GM12878 (cell line): ENCODE measurements at regions of chr1 and their contacts with region 1.

Region 1: GRCh38 chr1:169044296-169044695 is 62.2 kb upstream of the ATP1B1 start:
- DNase-seq: peak; percentile 76
- ATAC-seq: peak; percentile 94
- H3K4me3 ChIP-seq: no peak overlapping the region
- H3K27ac ChIP-seq: peak overlapping the region; percentile 45
- H3K4me1 ChIP-seq: peaks cover 47% of the 10 kb centered on the region
- H3K27me3 ChIP-seq: no peaks in the 10 kb centered on the region
- CTCF ChIP-seq: no peak
- EP300 ChIP-seq: peak in 1 of 2 experiments; percentile 28; a peak in 1 of 4 replicates
- POLR2A ChIP-seq: no peak
- RAD21 ChIP-seq: no peak

Region 2: GRCh38 chr1:169012416-169012815 is 31.9 kb before region 1 on chr1:
- CTCF ChIA-PET with region 1: interaction called, 9 read pairs
- POLR2A ChIA-PET with region 1: interaction called, 29 read pairs
- RAD21 ChIA-PET with region 1: interaction called, 21 read pairs
- SMC1A ChIA-PET with region 1: interaction called, 44 read pairs
- in situ Hi-C with region 1: no loop called
- intact Hi-C with region 1: loop called (anchors 2 kb)
- DNase-seq: peak; percentile 73
- ATAC-seq: peak; percentile 82
- H3K4me3 ChIP-seq: no peak overlapping the region
- H3K27ac ChIP-seq: peak overlapping the region; percentile 54
- H3K4me1 ChIP-seq: peaks cover 21% of the 10 kb centered on the region
- H3K27me3 ChIP-seq: no peaks in the 10 kb centered on the region
- CTCF ChIP-seq: no peak
- EP300 ChIP-seq: peak; percentile 43 to 86; a peak in 2 of 4 replicates
- POLR2A ChIP-seq: no peak
- RAD21 ChIP-seq: no peak

Region 3: GRCh38 chr1:169024800-169025271 is 19.5 kb before region 1 on chr1:
- CTCF ChIA-PET with region 1: interaction called, 26 read pairs
- POLR2A ChIA-PET with region 1: interaction called, 52 read pairs
- RAD21 ChIA-PET with region 1: interaction called, 100 read pairs
- SMC1A ChIA-PET with region 1: interaction called, 343 read pairs
- in situ Hi-C with region 1: no loop called
- intact Hi-C with region 1: loop called (anchors 1 kb)
- DNase-seq: peak; percentile 92
- ATAC-seq: peak; percentile 94
- H3K4me3 ChIP-seq: no peak overlapping the region
- H3K27ac ChIP-seq: peak overlapping the region; percentile 35; the same call in 1 of the 2 replicates
- H3K4me1 ChIP-seq: peaks cover 15% of the 10 kb centered on the region
- H3K27me3 ChIP-seq: no peaks in the 10 kb centered on the region
- CTCF ChIP-seq: no peak
- EP300 ChIP-seq: peak; percentile 77 to 88; a peak in 3 of 4 replicates
- POLR2A ChIP-seq: no peak
- RAD21 ChIP-seq: 0 out of 2 replicates have a peak, but pooled peaks have one; percentile 14

Region 4: GRCh38 chr1:169081503-169082123 is 37.3 kb after region 1 on chr1:
- CTCF ChIA-PET with region 1: interaction called, 4 read pairs
- POLR2A ChIA-PET with region 1: interaction called, 3 read pairs
- RAD21 ChIA-PET with region 1: interaction called, 109 read pairs
- SMC1A ChIA-PET with region 1: interaction called, 11 read pairs
- in situ Hi-C with region 1: no loop called
- intact Hi-C with region 1: no loop called
- DNase-seq: no peak
- ATAC-seq: no peak
- H3K4me3 ChIP-seq: no peak overlapping the region
- H3K27ac ChIP-seq: no peak overlapping the region
- H3K4me1 ChIP-seq: no peaks in the 10 kb centered on the region
- H3K27me3 ChIP-seq: no peaks in the 10 kb centered on the region
- CTCF ChIP-seq: no peak
- EP300 ChIP-seq: no peak
- POLR2A ChIP-seq: no peak
- RAD21 ChIP-seq: no peak

Region 5: GRCh38 chr1:169115891-169116585 is 71.7 kb after region 1 on chr1:
- CTCF ChIA-PET with region 1: interaction called, 100 read pairs
- POLR2A ChIA-PET with region 1: interaction called, 69 read pairs
- RAD21 ChIA-PET with region 1: interaction called, 135 read pairs
- SMC1A ChIA-PET with region 1: interaction called, 131 read pairs
- in situ Hi-C with region 1: no loop called
- intact Hi-C with region 1: no loop called
- DNase-seq: peak; percentile 66
- ATAC-seq: peak; percentile 89
- H3K4me3 ChIP-seq: no peak overlapping the region
- H3K27ac ChIP-seq: 0 out of 2 replicates have a peak overlapping the region, but pooled peaks have one; percentile 20
- H3K4me1 ChIP-seq: peaks cover 8% of the 10 kb centered on the region
- H3K27me3 ChIP-seq: no peaks in the 10 kb centered on the region
- CTCF ChIP-seq: no peak
- EP300 ChIP-seq: 0 out of 4 replicates have a peak, but pooled peaks of 1 of the 2 experiments have one; percentile 10
- POLR2A ChIP-seq: no peak
- RAD21 ChIP-seq: no peak